HepG2 (cell line): ENCODE measurements at regions of chr4 and their contacts with region 1.

Region 1: DNA sequence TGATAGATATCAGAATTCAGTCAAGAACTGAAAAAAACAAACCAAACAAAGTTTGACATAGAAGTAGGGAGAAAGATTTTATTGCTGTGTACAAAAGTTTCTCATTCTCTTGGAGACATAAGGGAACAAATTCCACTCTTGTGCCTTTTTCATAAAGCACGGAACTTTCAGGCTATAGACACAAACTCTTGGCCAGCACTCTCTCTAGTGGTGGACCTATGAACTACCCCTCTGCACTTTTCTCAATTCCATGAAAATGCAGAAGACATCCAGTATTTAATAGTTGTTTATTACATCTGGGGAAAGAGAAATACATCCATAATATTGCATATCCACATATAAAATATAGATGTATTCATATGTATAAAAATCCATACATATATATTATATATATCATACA is 291.6 kb upstream of the HS3ST1 start:
- DNase-seq: no peak
- ATAC-seq: no peak
- H3K4me3 ChIP-seq: no peak overlapping the region
- H3K27ac ChIP-seq: no peak overlapping the region
- H3K4me1 ChIP-seq: no peaks in the 10 kb centered on the region
- H3K27me3 ChIP-seq: no peaks in the 10 kb centered on the region
- CTCF ChIP-seq: no peak
- EP300 ChIP-seq: no peak
- POLR2A ChIP-seq: no peak
- RAD21 ChIP-seq: no peak

Region 2: DNA sequence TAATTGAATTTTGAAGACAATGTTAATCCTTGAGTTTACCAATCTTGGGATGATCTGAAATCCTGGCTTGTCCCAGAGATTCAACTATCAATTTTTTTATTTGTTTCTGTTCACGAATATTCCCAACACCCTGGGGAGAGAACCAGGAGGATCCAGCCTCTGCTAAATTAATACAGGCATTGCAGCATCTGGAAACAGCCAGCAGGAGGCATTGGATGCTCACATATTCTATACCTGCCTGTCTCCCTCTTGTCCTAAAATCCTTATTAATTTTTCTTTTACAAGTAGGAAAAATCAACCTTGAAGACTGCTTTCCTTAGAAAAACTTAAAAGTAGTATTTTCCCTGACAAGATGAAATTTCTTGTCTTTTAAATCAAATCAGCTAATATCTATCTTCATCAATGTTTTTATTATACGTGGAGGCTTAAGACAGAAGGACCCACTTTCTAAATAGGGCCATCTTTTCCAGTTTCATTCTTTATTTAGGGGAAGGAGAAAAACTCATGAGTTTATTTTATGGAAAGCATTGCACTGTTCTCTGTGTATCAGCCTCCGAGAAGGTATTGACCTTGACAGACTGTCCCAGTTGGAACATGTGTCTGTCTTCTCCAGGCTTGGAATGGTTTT is 1138.1 kb before region 1 on chr4:
- CTCF ChIA-PET with region 1: no interaction called
- POLR2A ChIA-PET with region 1: no interaction called
- in situ Hi-C with region 1: loop called (anchors 25 kb)
- intact Hi-C with region 1: loop called (anchors 5 kb)
- DNase-seq: peak; percentile 12
- ATAC-seq: peak; percentile 82
- H3K4me3 ChIP-seq: no peak overlapping the region
- H3K27ac ChIP-seq: no peak overlapping the region
- H3K4me1 ChIP-seq: no peaks in the 10 kb centered on the region
- H3K27me3 ChIP-seq: no peaks in the 10 kb centered on the region
- CTCF ChIP-seq: peak; percentile 71
- EP300 ChIP-seq: no peak
- POLR2A ChIP-seq: no peak
- RAD21 ChIP-seq: peak; percentile 48

Region 3: GRCh38 chr4:11623726-11624037 is 96.6 kb before region 1 on chr4:
- CTCF ChIA-PET with region 1: no interaction called
- POLR2A ChIA-PET with region 1: no interaction called
- in situ Hi-C with region 1: loop called (anchors 25 kb)
- intact Hi-C with region 1: no loop called
- DNase-seq: no peak
- ATAC-seq: no peak
- H3K4me3 ChIP-seq: no peak overlapping the region
- H3K27ac ChIP-seq: no peak overlapping the region
- H3K4me1 ChIP-seq: no peaks in the 10 kb centered on the region
- H3K27me3 ChIP-seq: no peaks in the 10 kb centered on the region
- CTCF ChIP-seq: peak; percentile 15; the same call in 1 of the 2 replicates
- EP300 ChIP-seq: no peak
- POLR2A ChIP-seq: no peak
- RAD21 ChIP-seq: no peak

Region 4: GRCh38 chr4:11741190-11741652 is 20.9 kb after region 1 on chr4:
- CTCF ChIA-PET with region 1: no interaction called
- POLR2A ChIA-PET with region 1: no interaction called
- in situ Hi-C with region 1: no loop called
- intact Hi-C with region 1: no loop called
- DNase-seq: no peak
- ATAC-seq: no peak
- H3K4me3 ChIP-seq: no peak overlapping the region
- H3K27ac ChIP-seq: no peak overlapping the region
- H3K4me1 ChIP-seq: no peaks in the 10 kb centered on the region
- H3K27me3 ChIP-seq: no peaks in the 10 kb centered on the region
- CTCF ChIP-seq: no peak
- EP300 ChIP-seq: no peak
- POLR2A ChIP-seq: no peak
- RAD21 ChIP-seq: no peak